Activated naive CD4-positive, alpha-beta T cell treated with anti-CD3 and anti-CD28 coated beads for 36 hours (primary cell): ENCODE measurements at regions of chr2 and their contacts with region 1.

Region 1: GRCh38 chr2:46915811-46916630 is 415 bp upstream of the MCFD2 start:
- DNase-seq: peak; percentile 81
- H3K4me3 Mint-ChIP-seq: peak overlapping the region; percentile 82
- H3K27ac Mint-ChIP-seq: peak overlapping the region; percentile 68
- H3K4me1 Mint-ChIP-seq: peaks cover 48% of the 10 kb centered on the region
- H3K27me3 Mint-ChIP-seq: no peaks in the 10 kb centered on the region

Region 2: DNA sequence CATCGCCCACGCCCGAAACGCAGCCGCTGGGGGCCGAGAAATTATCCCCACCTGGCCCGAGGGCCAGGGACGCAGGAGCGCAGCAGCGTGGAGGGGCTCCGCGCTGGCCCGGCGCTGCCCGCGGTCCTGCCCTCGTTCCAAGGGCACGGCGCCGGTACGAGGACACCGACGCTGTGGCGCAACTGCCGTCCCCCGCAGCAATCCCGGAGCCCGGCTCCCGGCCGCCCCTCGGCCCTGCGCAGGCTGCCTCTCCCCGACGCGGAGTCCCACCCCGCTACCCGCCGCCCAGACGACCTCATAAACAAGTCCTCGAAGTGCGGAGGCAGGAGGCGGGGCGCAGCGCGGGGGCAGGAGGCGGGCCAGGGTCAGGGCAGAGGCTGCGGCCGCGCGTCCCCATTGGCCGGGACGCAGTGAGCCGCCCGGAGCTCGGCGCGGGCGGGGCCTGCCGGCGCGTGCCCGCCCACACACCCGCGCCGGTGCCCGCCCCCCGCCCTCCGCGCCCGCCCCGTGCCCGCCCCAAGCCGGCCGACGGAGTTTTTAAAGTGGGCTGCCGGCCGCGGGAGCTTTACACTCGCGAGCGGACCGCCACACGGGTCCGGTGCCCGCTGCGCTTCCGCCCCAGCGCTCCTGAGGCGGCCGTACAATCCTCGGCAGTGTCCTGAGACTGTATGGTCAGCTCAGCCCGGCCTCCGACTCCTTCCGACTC is 619.0 kb before region 1 on chr2 and contains the start of gene EPAS1:
- CTCF ChIA-PET with region 1: no interaction called
- intact Hi-C with region 1: no loop called
- DNase-seq: peak; percentile 84
- H3K4me3 Mint-ChIP-seq: peak within 1 kb of the TSS; percentile 80
- H3K27ac Mint-ChIP-seq: no peak within 1 kb of the TSS
- H3K4me1 Mint-ChIP-seq: peaks cover 15% of the 10 kb centered on the region
- H3K27me3 Mint-ChIP-seq: peaks cover 47% of the 10 kb centered on the region
- total RNA-seq, gene EPAS1: 2.1 to 2.9 TPM

Region 3: DNA sequence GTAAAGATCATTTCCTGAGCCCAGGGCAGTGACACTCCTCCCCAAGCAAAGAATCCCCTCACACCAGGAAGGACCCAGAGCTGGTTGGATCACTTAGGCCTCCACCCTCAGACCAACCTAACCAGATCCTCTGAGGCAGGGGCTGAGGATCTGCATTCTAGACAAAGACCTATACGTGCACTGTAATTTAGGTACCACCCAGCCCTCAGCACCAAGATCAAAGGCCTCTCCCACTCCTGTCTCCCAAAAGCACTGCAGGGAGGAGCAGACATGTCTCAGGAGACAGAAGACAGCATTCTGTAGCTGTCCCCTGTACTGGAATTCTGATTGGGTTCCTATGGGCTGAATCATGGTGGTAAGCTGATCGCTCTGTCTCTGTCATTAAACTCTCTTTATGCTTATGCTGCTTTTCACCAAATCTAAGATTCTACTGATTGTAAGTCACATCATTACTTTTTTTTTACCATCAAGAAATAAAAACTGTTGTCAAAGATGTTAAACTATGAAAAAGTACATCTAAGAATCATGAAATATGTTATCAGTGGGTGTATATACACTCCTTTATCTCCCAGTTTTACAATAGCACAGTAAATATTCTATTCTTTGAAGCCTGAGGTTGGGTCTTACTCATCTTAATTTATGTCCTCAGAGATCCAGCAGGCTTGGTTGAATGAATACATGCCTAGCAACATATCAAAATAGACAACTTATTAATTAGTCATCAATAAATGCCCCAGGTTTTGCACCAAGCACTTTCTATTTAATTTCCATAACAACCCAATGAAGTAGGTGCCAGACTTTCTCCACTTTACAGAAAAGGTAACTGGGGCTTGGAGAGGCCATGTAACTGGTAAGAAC is 28.8 kb before region 1 on chr2:
- CTCF ChIA-PET with region 1: no interaction called
- intact Hi-C with region 1: no loop called
- DNase-seq: no peak
- H3K4me3 Mint-ChIP-seq: no peak overlapping the region
- H3K27ac Mint-ChIP-seq: peak overlapping the region; percentile 86
- H3K4me1 Mint-ChIP-seq: peaks cover 21% of the 10 kb centered on the region
- H3K27me3 Mint-ChIP-seq: no peaks in the 10 kb centered on the region

Region 4: DNA sequence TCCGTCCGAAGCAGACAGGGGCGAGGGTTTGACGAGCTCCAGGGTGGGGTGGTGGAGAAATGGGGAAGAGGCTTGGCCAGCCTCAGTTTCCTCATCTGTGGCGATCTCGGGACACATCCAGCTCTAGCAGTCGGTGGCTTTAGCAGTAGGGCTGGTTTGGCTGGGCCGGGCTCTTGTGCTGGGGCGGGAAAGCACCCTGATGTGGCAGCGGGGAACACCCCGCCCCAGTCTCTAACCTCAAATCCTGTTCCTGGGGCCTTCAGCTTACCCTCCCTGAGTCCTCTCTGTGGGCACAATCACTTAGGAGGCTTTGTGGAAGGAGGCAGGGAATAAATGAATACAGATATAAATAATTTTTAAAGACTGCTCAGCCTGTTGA is 26.1 kb after region 1 on chr2:
- CTCF ChIA-PET with region 1: interaction called, 7 read pairs
- intact Hi-C with region 1: loop called (anchors 1 kb)
- DNase-seq: peak; percentile 83
- H3K4me3 Mint-ChIP-seq: peak overlapping the region; percentile 99
- H3K27ac Mint-ChIP-seq: peak overlapping the region; percentile 100
- H3K4me1 Mint-ChIP-seq: peaks cover 44% of the 10 kb centered on the region
- H3K27me3 Mint-ChIP-seq: no peaks in the 10 kb centered on the region

Region 5: GRCh38 chr2:47076586-47077441 is 160.8 kb after region 1 on chr2:
- CTCF ChIA-PET with region 1: interaction called, 3 read pairs
- intact Hi-C with region 1: loop called (anchors 5 kb)
- DNase-seq: no peak
- H3K4me3 Mint-ChIP-seq: no peak overlapping the region
- H3K27ac Mint-ChIP-seq: peak overlapping the region; percentile 30
- H3K4me1 Mint-ChIP-seq: peaks cover 5% of the 10 kb centered on the region
- H3K27me3 Mint-ChIP-seq: no peaks in the 10 kb centered on the region

Region 6: GRCh38 chr2:47323009-47323821 is 407.2 kb after region 1 on chr2:
- CTCF ChIA-PET with region 1: no interaction called
- intact Hi-C with region 1: loop called (anchors 2 kb)
- DNase-seq: peak; percentile 79
- H3K4me3 Mint-ChIP-seq: no peak overlapping the region
- H3K27ac Mint-ChIP-seq: no peak overlapping the region
- H3K4me1 Mint-ChIP-seq: no peaks in the 10 kb centered on the region
- H3K27me3 Mint-ChIP-seq: peaks cover 1% of the 10 kb centered on the region